ENCODE measurements at regions of chr4 and their contacts with region 1.

Region 1: GRCh38 chr4:151015459-151016347 is 619 bp upstream of the LRBA start:
- DNase-seq: peak; percentile 93
- ATAC-seq: peak; percentile 83
- H3K4me3 Mint-ChIP-seq: peak overlapping the region; percentile 100
- H3K27ac Mint-ChIP-seq: peak overlapping the region; percentile 100
- H3K4me1 Mint-ChIP-seq: peaks cover 22% of the 10 kb centered on the region
- H3K27me3 Mint-ChIP-seq: no peaks in the 10 kb centered on the region

Region 2: DNA sequence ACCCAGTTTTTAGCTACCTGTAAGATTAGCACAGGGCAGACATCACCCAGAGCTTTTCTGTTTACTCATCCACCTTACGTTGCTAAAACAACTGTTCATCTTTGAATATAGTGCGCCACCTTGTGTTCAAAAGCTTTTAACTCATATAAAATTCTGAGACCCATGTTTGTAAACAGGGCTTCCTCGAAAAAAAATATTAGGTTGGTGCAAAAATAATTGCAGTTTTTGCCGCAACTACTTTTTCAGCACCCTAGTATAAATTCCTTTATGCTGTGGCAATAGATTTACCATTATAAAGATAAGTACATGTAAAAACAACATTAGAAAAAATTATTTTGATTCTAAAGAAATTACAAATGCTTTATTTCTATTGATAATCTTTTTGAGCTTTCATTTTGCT is 148.6 kb before region 1 on chr4:
- POLR2A ChIA-PET with region 1: no interaction called
- DNase-seq: no peak
- ATAC-seq: peak; percentile 67
- H3K4me3 Mint-ChIP-seq: no peak overlapping the region
- H3K27ac Mint-ChIP-seq: no peak overlapping the region
- H3K4me1 Mint-ChIP-seq: no peaks in the 10 kb centered on the region
- H3K27me3 Mint-ChIP-seq: no peaks in the 10 kb centered on the region

Region 3: DNA sequence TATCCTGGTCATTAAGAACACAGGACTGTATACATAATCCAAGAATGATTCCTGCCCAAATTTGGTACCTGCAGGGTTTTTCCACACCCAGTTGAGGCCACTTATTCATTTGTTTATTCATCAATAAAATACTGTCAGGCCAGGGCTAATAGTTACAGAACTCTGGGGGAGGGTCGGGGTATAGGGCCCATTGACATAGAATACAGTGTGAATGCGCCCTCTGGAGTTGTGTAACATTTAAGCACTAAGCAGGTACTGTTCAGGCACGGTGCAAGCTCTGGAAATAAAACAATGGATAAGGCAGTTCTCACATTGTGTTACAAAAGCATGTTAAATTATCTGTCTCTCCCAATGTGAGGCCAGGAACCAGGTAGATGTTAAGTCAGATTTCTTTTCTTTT is 30.2 kb after region 1 on chr4:
- POLR2A ChIA-PET with region 1: no interaction called
- DNase-seq: no peak
- ATAC-seq: no peak
- H3K4me3 Mint-ChIP-seq: no peak overlapping the region
- H3K27ac Mint-ChIP-seq: no peak overlapping the region
- H3K4me1 Mint-ChIP-seq: no peaks in the 10 kb centered on the region
- H3K27me3 Mint-ChIP-seq: no peaks in the 10 kb centered on the region

Region 4: DNA sequence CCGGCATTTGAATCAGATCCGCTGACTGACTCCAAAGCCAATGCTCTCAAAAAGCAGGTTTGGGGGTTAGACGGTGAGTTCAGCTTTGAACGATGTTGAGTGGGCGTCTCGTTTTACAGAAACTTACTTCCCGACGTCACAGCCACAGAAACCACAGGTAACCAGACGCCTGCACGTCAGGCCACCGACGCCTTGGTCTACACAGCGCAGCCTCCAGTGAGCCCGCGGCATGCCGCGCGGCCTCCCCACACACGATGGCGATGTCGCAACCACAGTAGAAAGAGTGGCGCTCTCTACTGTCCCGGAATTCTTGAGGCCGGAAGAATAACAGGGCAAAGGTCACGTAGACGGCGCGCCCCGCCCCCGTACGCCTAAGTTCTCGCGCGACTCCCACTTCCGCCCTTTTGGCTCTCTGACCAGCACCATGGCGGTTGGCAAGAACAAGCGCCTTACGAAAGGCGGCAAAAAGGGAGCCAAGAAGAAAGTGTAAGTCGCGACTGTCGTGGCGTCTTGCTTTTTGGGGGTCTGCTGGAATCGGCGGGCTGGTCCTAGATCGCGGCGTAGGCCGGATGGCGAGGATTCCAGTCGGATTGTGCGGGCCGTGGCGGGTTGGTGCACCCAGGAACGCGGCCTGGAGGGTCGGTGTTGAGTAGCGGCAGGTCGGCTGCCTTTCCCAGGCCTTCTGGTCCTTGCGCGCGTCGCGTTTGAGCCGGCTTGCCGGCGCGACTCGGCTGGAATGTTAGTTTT is 83.7 kb after region 1 on chr4 and contains the start of gene RPS3A:
- POLR2A ChIA-PET with region 1: interaction called, 32 read pairs
- DNase-seq: peak; percentile 99
- ATAC-seq: peak; percentile 93
- H3K4me3 Mint-ChIP-seq: peak within 1 kb of the TSS; percentile 96
- H3K27ac Mint-ChIP-seq: peak within 1 kb of the TSS; percentile 96
- H3K4me1 Mint-ChIP-seq: peaks cover 33% of the 10 kb centered on the region
- H3K27me3 Mint-ChIP-seq: no peaks in the 10 kb centered on the region
- total RNA-seq, gene RPS3A: 1,980 to 2,148 TPM